ENCODE measurements at regions of chr4 and their contacts with region 1.

Region 1: DNA sequence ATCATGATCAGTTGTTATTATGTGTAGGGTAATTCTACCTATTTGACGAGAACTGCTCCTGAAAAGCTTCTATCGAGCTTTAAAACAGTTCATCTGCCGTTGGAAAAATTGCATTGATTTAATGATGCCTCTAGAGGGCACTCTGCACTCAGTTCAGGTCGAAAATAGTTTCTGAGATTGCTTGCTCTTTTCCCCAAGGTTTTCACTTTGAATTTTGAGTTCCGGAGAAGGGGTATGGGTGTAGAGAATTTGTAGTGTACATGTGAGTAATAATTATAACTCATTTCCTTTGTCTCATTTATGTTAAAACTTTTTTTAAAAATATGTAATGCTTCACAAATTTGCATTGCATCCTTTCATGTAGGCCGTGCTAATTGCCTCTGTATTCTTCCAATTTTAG is 28.4 kb upstream of the TNIP3 start:
- DNase-seq: peak; percentile 51
- ATAC-seq: no peak
- H3K4me3 ChIP-seq: no peak overlapping the region
- H3K27ac ChIP-seq: no peak overlapping the region
- H3K4me1 ChIP-seq: no peaks in the 10 kb centered on the region
- H3K27me3 ChIP-seq: peaks cover 5% of the 10 kb centered on the region; the same call in 1 of the 2 replicates
- CTCF ChIP-seq: peak; percentile 75

Region 2: GRCh38 chr4:120589787-120590186 is 602.7 kb before region 1 on chr4:
- CTCF ChIA-PET with region 1: no interaction called
- POLR2A ChIA-PET with region 1: no interaction called
- intact Hi-C with region 1: no loop called
- DNase-seq: no peak
- ATAC-seq: no peak
- H3K4me3 ChIP-seq: no peak overlapping the region
- H3K27ac ChIP-seq: no peak overlapping the region
- H3K4me1 ChIP-seq: no peaks in the 10 kb centered on the region
- H3K27me3 ChIP-seq: no peaks in the 10 kb centered on the region
- CTCF ChIP-seq: no peak

Region 3: DNA sequence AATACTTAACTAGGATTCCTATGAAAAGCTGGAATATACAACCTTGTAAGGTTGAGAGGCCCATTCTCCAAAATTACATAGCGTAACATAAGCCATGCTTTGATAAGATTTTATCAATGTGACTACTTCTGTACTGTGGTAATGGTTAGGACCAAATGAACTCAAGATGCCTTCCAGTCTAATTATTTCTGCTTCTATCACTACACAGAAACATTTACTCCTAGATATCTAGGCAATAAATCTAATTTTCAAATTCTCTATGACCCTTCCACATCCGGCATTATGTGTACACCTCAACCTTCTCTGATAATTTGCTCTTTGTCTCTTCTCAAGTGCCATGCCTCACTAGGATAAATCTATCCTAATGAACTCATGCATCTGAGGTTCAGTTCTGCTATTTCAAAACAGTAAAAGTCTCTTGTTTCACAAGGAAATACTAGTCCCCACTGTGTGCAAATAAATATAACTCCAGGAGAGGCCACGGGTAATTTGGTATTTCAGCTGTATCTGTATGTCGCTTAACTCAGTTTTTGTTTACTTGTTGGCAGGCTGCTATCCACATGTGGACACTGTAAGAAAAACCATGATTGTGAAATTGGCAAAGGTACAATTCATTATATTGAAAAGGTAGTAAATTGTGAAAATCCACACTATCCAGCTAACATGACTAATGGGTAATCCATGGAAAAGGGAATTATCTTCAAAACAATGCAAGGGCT is 363.2 kb before region 1 on chr4:
- CTCF ChIA-PET with region 1: no interaction called
- POLR2A ChIA-PET with region 1: no interaction called
- intact Hi-C with region 1: no loop called
- DNase-seq: peak; percentile 2
- ATAC-seq: no peak
- H3K4me3 ChIP-seq: no peak overlapping the region
- H3K27ac ChIP-seq: no peak overlapping the region
- H3K4me1 ChIP-seq: peaks cover 16% of the 10 kb centered on the region
- H3K27me3 ChIP-seq: no peaks in the 10 kb centered on the region
- CTCF ChIP-seq: no peak

Region 4: DNA sequence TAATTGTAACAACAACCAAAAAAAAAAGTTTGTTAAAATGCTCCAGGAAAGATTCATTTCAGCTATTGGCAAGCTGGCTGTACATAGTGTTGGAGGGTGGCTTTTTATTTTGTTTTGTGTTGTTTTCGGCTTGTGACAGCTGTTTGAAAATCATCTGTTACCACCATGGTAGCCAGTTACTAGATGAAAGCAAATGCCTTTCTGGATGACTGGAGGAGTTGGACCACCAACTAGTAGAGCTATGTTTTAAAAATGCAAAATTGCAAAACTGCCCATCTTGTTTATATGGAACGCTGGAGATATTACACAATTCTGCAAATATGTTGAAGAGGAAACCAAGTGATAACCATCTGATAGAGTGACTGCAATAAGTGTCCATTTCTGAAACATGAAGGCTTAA is 24.9 kb after region 1 on chr4:
- CTCF ChIA-PET with region 1: no interaction called
- POLR2A ChIA-PET with region 1: no interaction called
- intact Hi-C with region 1: no loop called
- DNase-seq: no peak
- ATAC-seq: no peak
- H3K4me3 ChIP-seq: no peak overlapping the region
- H3K27ac ChIP-seq: no peak overlapping the region
- H3K4me1 ChIP-seq: no peaks in the 10 kb centered on the region
- H3K27me3 ChIP-seq: peaks cover 40% of the 10 kb centered on the region
- CTCF ChIP-seq: no peak

Region 5: GRCh38 chr4:121252224-121252806 is 59.8 kb after region 1 on chr4:
- CTCF ChIA-PET with region 1: interaction called, 7 read pairs
- POLR2A ChIA-PET with region 1: no interaction called
- intact Hi-C with region 1: loop called (anchors 1 kb)
- DNase-seq: peak; percentile 75
- ATAC-seq: peak; percentile 69
- H3K4me3 ChIP-seq: no peak overlapping the region
- H3K27ac ChIP-seq: no peak overlapping the region
- H3K4me1 ChIP-seq: no peaks in the 10 kb centered on the region
- H3K27me3 ChIP-seq: peaks cover 3% of the 10 kb centered on the region; the same call in 1 of the 2 replicates
- CTCF ChIP-seq: peak; percentile 80

Region 6: GRCh38 chr4:121421594-121421993 is 229.1 kb after region 1 on chr4:
- CTCF ChIA-PET with region 1: no interaction called
- POLR2A ChIA-PET with region 1: no interaction called
- intact Hi-C with region 1: loop called (anchors 10 kb)
- DNase-seq: no peak
- ATAC-seq: no peak
- H3K4me3 ChIP-seq: no peak overlapping the region
- H3K27ac ChIP-seq: no peak overlapping the region
- H3K4me1 ChIP-seq: no peaks in the 10 kb centered on the region
- H3K27me3 ChIP-seq: peaks cover 10% of the 10 kb centered on the region; the same call in 1 of the 2 replicates
- CTCF ChIP-seq: peak; percentile 49; the same call in 1 of the 2 replicates

Measured in PC-3 (cell line).